MCF 10A (cell line): ENCODE measurements at regions of chr1 and their contacts with region 1.

Region 1: DNA sequence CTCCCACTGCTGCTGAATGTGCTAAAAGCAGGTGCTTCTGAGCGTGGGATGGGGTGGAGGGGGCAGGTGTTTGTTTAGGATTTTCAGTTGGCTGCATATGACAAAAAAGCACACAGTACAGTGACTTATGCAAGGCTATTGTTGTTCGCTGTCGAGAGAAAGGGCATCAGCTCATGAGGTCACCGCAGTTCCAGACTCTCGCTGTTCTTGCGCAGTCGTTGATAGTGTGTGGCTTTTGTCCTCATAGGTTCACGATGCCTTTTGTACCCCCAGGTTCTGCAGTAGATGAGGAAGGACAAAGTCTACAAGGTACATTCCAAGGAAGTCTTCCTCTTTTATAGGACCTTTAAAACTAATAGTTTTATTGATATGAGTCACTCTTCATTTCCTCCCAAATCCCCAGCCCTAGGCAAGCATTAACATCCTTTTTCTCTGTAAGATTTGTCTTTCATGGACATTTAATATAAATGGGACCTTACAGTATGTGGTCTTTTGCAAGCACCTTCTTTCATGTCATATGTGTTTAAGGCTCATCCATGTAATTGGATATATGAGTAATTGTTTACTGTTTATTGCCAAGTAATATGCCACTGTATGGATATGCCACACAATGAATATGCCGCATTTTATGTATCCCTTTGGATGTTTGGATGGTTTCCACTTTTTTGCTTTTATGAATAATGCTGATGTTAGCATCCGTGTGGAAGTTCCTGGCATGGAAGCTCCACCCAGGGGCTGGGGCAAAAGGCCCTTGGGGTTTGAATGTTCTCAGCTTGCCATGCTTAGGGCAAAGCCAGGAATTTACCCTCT is 14.5 kb upstream of the NLRP3 start:
- DNase-seq: peak; percentile 49
- H3K4me3 Mint-ChIP-seq: peak overlapping the region; percentile 49
- H3K27ac Mint-ChIP-seq: peak overlapping the region; percentile 41
- H3K4me1 Mint-ChIP-seq: peaks cover 21% of the 10 kb centered on the region
- H3K27me3 Mint-ChIP-seq: no peaks in the 10 kb centered on the region
- CTCF ChIP-seq: no peak

Region 2: GRCh38 chr1:247415423-247416361 is 14.2 kb after region 1 on chr1 and contains the start of gene NLRP3:
- CTCF ChIA-PET with region 1: interaction called, 3 read pairs
- POLR2A ChIA-PET with region 1: interaction called, 12 read pairs
- intact Hi-C with region 1: no loop called
- DNase-seq: peak; percentile 55
- H3K4me3 Mint-ChIP-seq: peak within 1 kb of the TSS; percentile 14
- H3K27ac Mint-ChIP-seq: peak within 1 kb of the TSS; percentile 2
- H3K4me1 Mint-ChIP-seq: peaks cover 18% of the 10 kb centered on the region
- H3K27me3 Mint-ChIP-seq: no peaks in the 10 kb centered on the region
- CTCF ChIP-seq: no peak
- total RNA-seq, gene NLRP3: 0.16 and 0.42 TPM in 2 replicates

Region 3: DNA sequence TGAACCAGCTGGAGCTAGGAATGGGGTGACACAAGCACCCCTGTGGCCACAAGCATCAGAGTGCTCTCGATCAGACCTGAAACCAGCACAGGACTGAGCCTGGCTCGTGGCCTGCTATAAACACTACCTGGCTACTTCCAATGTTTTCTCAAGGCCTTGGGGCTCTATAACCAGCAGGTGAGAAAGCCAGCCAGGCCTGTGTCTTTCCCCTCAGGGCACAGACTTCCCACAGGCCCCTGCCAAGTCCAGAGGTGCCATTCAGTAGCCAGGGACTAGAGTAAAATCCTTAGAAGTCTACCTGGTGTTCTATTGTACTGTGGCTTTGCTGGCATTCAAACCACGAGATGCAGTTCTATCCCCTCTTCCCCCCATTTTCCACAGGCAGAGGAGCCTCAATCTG is 226.4 kb after region 1 on chr1:
- CTCF ChIA-PET with region 1: no interaction called
- POLR2A ChIA-PET with region 1: no interaction called
- intact Hi-C with region 1: no loop called
- DNase-seq: no peak
- H3K4me3 Mint-ChIP-seq: no peak overlapping the region
- H3K27ac Mint-ChIP-seq: no peak overlapping the region
- H3K4me1 Mint-ChIP-seq: no peaks in the 10 kb centered on the region
- H3K27me3 Mint-ChIP-seq: no peaks in the 10 kb centered on the region
- CTCF ChIP-seq: no peak